ENCODE measurements at regions of chr6 and their contacts with region 1.

Region 1: GRCh38 chr6:144349690-144350527 is 64.8 kb downstream of the UTRN start:
- DNase-seq: no peak
- ATAC-seq: peak; percentile 54
- H3K4me3 Mint-ChIP-seq: peak overlapping the region; percentile 70
- H3K27ac Mint-ChIP-seq: peak overlapping the region; percentile 92
- H3K4me1 Mint-ChIP-seq: peaks cover 81% of the 10 kb centered on the region
- H3K27me3 Mint-ChIP-seq: no peaks in the 10 kb centered on the region
- CTCF ChIP-seq: no peak

Region 2: DNA sequence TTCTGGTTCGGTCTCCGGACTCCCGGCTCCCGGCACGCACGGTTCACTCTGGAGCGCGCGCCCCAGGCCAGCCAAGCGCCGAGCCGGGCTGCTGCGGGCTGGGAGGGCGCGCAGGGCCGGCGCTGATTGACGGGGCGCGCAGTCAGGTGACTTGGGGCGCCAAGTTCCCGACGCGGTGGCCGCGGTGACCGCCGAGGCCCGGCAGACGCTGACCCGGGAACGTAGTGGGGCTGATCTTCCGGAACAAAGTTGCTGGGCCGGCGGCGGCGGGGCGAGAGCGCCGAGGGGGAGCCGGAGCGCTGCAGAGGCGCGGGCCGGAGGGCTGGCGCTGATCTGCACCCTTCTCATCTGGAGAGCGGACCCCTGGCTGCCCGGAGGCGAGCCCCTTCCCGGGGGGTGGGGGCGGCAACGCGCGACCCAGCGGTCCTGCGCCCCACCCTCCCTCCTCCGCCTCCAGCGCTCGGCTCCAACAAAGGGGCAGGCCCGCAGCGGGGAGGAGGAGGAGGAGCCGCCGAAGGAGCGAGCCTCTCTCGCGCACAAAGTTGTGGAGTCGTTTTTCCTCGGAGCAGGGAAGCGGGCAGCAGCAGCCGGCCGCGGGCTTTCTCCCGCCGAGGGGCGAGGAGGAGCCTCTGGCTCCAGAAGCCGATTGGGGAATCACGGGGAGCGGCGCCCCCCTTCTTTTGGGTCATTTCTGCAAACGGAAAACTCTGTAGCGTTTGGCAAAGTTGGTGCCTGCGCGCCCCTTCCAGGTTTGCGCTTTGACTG is 64.9 kb before region 1 on chr6 and contains the start of gene UTRN:
- CTCF ChIA-PET with region 1: no interaction called
- POLR2A ChIA-PET with region 1: interaction called, 3 read pairs
- intact Hi-C with region 1: loop called (anchors 5 kb)
- DNase-seq: peak; percentile 56
- ATAC-seq: peak; percentile 68
- H3K4me3 Mint-ChIP-seq: peak within 1 kb of the TSS; percentile 78
- H3K27ac Mint-ChIP-seq: peak within 1 kb of the TSS; percentile 82
- H3K4me1 Mint-ChIP-seq: peaks cover 11% of the 10 kb centered on the region
- H3K27me3 Mint-ChIP-seq: peaks cover 18% of the 10 kb centered on the region
- CTCF ChIP-seq: no peak
- total RNA-seq, gene UTRN: 53.9 to 58.5 TPM

Region 3: GRCh38 chr6:144321839-144322591 is 27.9 kb before region 1 on chr6:
- CTCF ChIA-PET with region 1: no interaction called
- POLR2A ChIA-PET with region 1: no interaction called
- intact Hi-C with region 1: no loop called
- DNase-seq: no peak
- ATAC-seq: no peak
- H3K4me3 Mint-ChIP-seq: no peak overlapping the region
- H3K27ac Mint-ChIP-seq: no peak overlapping the region
- H3K4me1 Mint-ChIP-seq: peaks cover 8% of the 10 kb centered on the region
- H3K27me3 Mint-ChIP-seq: no peaks in the 10 kb centered on the region
- CTCF ChIP-seq: no peak

Region 4: GRCh38 chr6:144460327-144461095 is 110.6 kb after region 1 on chr6:
- CTCF ChIA-PET with region 1: no interaction called
- POLR2A ChIA-PET with region 1: no interaction called
- intact Hi-C with region 1: loop called (anchors 10 kb)
- DNase-seq: no peak
- ATAC-seq: peak; percentile 86
- H3K4me3 Mint-ChIP-seq: peak overlapping the region; percentile 20
- H3K27ac Mint-ChIP-seq: peak overlapping the region; percentile 85
- H3K4me1 Mint-ChIP-seq: peaks cover 22% of the 10 kb centered on the region
- H3K27me3 Mint-ChIP-seq: no peaks in the 10 kb centered on the region
- CTCF ChIP-seq: no peak

Measured in activated CD8-positive, alpha-beta T cell treated with anti-CD3 and anti-CD28 coated beads for 36 hours (primary cell).